PC-9 (cell line): ENCODE measurements at regions of chr19 and their contacts with region 1.

Region 1: GRCh38 chr19:32674959-32675719 is at the start of gene ANKRD27:
- DNase-seq: peak; percentile 92 to 99
- H3K4me3 ChIP-seq: peak within 1 kb of the TSS; percentile 89
- H3K27ac ChIP-seq: peak within 1 kb of the TSS; percentile 45; the same call in 1 of the 2 replicates
- H3K4me1 ChIP-seq: peaks cover 10% of the 10 kb centered on the region; the same call in 1 of the 2 replicates
- H3K27me3 ChIP-seq: no peaks in the 10 kb centered on the region
- CTCF ChIP-seq: no peak
- total RNA-seq, gene ANKRD27: 55.5 and 59.6 TPM in 2 replicates

Region 2: GRCh38 chr19:32611161-32611560 is 64.0 kb before region 1 on chr19:
- CTCF ChIA-PET with region 1: no interaction called
- POLR2A ChIA-PET with region 1: no interaction called
- intact Hi-C with region 1: no loop called
- DNase-seq: no peak
- H3K4me3 ChIP-seq: no peak overlapping the region
- H3K27ac ChIP-seq: no peak overlapping the region
- H3K4me1 ChIP-seq: no peaks in the 10 kb centered on the region
- H3K27me3 ChIP-seq: no peaks in the 10 kb centered on the region
- CTCF ChIP-seq: no peak

Region 3: DNA sequence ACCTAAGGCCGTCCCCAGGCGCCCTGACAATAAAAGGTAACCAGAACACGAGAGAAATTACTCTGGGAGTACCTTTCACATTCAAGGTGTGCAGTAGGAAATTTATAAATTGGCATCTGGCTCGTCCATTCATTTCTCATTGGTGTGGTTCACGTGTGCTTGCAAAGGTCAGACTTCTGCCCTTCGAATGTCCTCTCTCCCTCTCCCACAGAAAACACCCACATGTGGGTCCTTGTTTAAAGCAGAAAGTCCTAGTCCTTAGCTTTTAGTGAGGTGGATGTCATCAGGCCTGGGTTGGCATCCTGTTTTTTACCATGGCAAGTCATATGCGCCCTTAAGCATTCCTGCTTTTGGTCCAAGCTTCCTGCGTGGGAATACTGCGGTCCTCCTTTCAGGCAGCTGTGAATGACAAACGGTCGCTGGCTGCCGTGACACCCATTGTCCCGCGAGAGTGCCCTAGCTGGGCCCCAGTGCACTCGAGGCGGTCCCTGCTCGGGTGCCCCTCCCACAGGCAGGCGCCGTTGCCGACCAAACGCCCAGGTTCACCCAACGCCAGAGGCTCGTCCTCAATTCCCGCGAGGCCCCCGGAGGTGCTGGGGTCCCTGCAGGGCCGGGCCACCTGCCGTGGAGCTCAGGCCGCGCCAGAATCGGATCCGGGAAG is 16.3 kb after region 1 on chr19 and contains the start of gene NUDT19:
- CTCF ChIA-PET with region 1: no interaction called
- POLR2A ChIA-PET with region 1: interaction called, 6 read pairs
- intact Hi-C with region 1: loop called (anchors 1 kb)
- DNase-seq: peak; percentile 75 to 90
- H3K4me3 ChIP-seq: peak within 1 kb of the TSS; percentile 85
- H3K27ac ChIP-seq: peak within 1 kb of the TSS; percentile 68; the same call in 1 of the 2 replicates
- H3K4me1 ChIP-seq: peaks cover 35% of the 10 kb centered on the region
- H3K27me3 ChIP-seq: no peaks in the 10 kb centered on the region
- CTCF ChIP-seq: no peak
- total RNA-seq, gene NUDT19: 21.3 and 26.7 TPM in 2 replicates